Aorta (tissue), 5 donors: ENCODE measurements at regions of chr19 and their contacts with region 1.

Region 1: GRCh38 chr19:19821366-19821951 is at the start of gene ZNF506:
- DNase-seq: peak; percentile 99
- ATAC-seq: peak; percentile 98
- H3K4me3 ChIP-seq: peak within 1 kb of the TSS; percentile 36 to 63
- H3K27ac ChIP-seq: peak within 1 kb of the TSS; percentile 83 to 86
- H3K4me1 ChIP-seq: no peaks in the 10 kb centered on the region
- H3K27me3 ChIP-seq: no peaks in the 10 kb centered on the region
- total RNA-seq, gene ZNF506: 28.8 to 37.7 TPM

Region 2: GRCh38 chr19:19663256-19664038 is 158.0 kb before region 1 on chr19 and contains the start of gene ATP13A1:
- intact Hi-C with region 1: loop called in 1 of 2 experiments (anchors 10 kb)
- DNase-seq: peak; percentile 98
- ATAC-seq: peak; percentile 98
- H3K4me3 ChIP-seq: peak within 1 kb of the TSS; percentile 87 to 96
- H3K27ac ChIP-seq: peak within 1 kb of the TSS in 1 of 2 donors; percentile 55
- H3K4me1 ChIP-seq: peaks cover 0 to 1% of the 10 kb centered on the region in 2 donors
- H3K27me3 ChIP-seq: no peaks in the 10 kb centered on the region
- total RNA-seq, gene ATP13A1: 41.7 to 53.6 TPM

Region 3: DNA sequence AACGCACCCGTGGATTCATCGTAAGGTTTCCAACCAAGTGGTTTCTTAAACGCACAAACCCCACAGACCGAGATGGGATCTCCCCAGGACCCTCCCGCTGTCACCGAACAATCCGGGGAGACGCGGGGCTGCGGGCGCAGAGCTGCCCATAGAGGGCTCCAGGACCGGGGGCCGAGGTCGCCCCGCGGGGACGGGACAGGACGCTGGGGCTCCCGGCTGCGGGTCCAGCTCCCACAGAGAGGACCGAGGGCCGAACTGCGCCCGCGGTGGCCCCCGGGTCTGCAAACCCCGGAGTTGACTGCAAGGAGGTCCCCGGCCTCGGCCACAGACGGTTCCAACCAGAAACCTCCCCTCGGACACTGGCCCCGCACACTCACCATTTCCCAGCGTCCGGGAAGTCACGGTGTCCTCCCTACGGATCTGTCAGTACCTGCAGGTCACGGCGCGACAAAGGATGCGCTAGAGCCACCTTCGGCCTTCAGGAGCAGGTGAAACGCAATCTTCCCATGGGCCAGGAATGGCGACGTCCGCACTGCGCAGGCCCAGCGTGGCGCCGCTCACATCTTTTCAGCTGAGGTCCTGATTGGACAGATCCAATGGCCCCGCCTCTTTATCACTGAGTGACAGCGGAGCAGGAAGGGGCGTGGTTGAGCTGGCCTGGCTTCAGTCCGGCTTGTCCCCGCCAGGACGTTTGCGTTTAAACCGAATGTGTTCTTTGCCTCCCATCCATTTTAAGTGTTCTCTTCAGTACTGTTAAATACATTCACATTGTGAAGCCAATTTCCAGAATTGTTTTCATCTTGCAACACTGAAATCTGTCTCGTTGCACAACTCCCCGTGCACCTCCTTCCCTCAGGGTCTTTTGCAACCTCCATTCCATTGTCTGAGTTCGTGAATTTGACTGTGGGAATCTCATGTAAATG is 88.6 kb before region 1 on chr19 and contains the start of gene ZNF14:
- intact Hi-C with region 1: loop called (anchors 5 kb)
- DNase-seq: peak; percentile 96
- ATAC-seq: peak; percentile 100
- H3K4me3 ChIP-seq: peak within 1 kb of the TSS; percentile 86 to 92
- H3K27ac ChIP-seq: peak within 1 kb of the TSS in 1 of 2 donors; percentile 38
- H3K4me1 ChIP-seq: no peaks in the 10 kb centered on the region
- H3K27me3 ChIP-seq: no peaks in the 10 kb centered on the region
- total RNA-seq, gene ZNF14: 6.2 to 10.9 TPM

Region 4: DNA sequence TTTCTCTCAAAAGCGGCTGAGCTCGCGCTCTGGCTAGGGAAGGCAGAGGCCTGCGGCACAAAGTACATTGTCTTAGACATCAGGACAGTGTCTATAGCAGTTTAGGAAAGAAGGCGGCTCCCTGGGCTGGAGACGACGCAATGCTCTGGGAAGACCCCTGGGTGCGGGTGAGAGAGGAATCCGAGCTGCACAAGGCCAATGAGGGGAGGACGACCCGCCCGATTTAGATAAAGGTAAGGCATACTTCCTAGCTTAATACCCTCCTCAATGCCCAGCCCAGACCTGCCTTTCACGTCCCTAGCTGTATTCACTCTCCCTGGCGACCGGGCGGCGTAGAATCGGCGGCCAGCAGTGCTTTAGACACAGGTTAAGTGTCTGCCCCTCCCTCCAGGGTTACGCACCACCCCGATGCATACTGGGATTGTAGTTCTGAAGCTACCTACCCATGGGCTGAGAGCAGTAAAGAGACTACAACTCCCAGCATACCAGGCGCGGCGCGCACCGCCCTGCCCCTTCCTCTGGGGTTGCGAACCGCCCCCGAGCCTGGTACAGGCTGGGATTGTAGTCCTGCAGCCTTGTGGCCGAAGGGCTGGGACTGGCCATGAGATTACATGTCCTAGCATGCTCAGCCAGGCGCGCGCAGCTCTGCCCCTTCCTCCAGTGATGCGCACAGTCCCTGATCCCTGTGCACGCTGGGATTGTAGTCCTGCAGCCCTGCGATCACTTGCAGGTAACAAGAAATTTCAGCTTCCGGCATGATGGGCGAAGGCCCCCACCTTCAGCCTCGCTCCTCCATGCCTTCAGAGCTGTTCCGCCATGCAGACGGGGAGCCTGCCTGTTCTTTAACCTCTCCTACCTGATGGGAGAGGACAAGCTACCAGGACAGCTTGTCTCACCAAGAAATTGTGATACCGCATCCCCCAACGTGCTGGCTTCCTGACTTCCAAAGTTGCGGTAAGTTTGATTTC is 45.1 kb before region 1 on chr19:
- intact Hi-C with region 1: loop called (anchors 2 to 5 kb)
- DNase-seq: peak; percentile 99
- ATAC-seq: peak; percentile 100
- H3K4me3 ChIP-seq: peak overlapping the region; percentile 22 to 65
- H3K27ac ChIP-seq: no peak overlapping the region
- H3K4me1 ChIP-seq: peaks cover 0 to 4% of the 10 kb centered on the region in 2 donors
- H3K27me3 ChIP-seq: no peaks in the 10 kb centered on the region

Region 5: DNA sequence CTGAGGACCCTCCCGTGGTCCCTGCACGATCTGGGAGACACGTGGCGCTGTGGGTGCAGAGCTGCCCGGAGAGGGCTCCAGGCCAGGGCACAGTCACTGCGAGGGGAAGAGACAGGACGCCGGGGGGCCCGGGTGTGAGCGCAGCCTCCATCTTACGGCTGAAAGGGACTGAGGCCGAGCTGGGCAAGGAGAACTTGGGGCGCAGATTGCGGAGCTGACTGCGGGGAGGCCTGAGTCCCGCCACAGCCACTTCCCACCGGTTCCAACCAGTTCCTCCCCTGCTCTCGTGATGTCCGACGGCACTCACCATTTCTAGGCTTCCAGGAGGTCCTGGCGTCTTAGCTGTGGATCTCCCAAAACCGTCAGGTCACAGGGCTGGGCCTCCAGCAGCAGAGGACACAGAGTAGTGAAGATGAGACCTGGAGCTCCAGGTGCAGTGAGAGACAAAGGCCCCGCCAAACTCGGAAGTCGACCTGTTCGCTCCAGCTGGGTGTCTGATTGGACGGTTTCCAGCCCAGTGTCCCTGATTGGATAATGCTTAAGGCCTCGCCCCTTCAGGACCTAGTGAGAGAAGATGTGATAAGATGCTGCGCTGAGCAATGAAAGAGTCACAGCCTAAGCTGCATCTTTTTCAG is 39.4 kb after region 1 on chr19:
- intact Hi-C with region 1: loop called (anchors 5 kb)
- DNase-seq: peak in 1 of 2 donors; percentile 49
- ATAC-seq: no peak
- H3K4me3 ChIP-seq: no peak overlapping the region
- H3K27ac ChIP-seq: no peak overlapping the region
- H3K4me1 ChIP-seq: no peaks in the 10 kb centered on the region
- H3K27me3 ChIP-seq: peaks cover 0 to 2% of the 10 kb centered on the region in 2 donors

Region 6: GRCh38 chr19:19865739-19866481 is 44.5 kb after region 1 on chr19 and contains the start of gene ZNF253:
- intact Hi-C with region 1: loop called (anchors 5 kb)
- DNase-seq: peak; percentile 98
- ATAC-seq: peak; percentile 98
- H3K4me3 ChIP-seq: peak within 1 kb of the TSS; percentile 76 to 80
- H3K27ac ChIP-seq: peak within 1 kb of the TSS; percentile 43 to 50
- H3K4me1 ChIP-seq: no peaks in the 10 kb centered on the region
- H3K27me3 ChIP-seq: no peaks in the 10 kb centered on the region
- total RNA-seq, gene ZNF253: 5.4 to 12.6 TPM